ENCODE measurements at regions of chr7 and their contacts with region 1.

Region 1: DNA sequence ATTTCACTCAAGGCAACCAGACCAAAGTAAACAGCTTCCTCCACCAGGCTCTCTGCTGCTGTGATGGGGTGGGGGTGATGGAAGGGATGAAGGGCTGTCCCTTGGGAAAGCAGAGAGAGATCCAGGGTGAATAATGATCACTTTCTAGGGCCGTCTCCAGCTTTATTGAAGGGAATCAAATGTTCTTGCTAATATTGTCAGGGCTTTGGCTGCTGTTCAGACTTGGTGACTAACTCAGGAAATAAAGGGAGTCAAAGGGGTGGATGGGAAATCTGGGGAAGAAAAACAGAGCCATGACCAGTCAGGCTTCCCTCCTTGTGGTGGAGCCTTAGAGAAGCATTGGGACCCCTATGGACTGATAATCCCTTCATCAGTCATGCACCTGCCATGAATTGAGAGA is 196.2 kb upstream of the AGK start:
- DNase-seq: no peak
- H3K4me3 ChIP-seq: no peak overlapping the region
- CTCF ChIP-seq: no peak
- POLR2A ChIP-seq: no peak

Region 2: GRCh38 chr7:141333459-141333858 is 21.6 kb before region 1 on chr7:
- intact Hi-C with region 1: loop called (anchors 1 kb)
- DNase-seq: no peak
- H3K4me3 ChIP-seq: no peak overlapping the region
- CTCF ChIP-seq: no peak
- POLR2A ChIP-seq: no peak

Region 3: DNA sequence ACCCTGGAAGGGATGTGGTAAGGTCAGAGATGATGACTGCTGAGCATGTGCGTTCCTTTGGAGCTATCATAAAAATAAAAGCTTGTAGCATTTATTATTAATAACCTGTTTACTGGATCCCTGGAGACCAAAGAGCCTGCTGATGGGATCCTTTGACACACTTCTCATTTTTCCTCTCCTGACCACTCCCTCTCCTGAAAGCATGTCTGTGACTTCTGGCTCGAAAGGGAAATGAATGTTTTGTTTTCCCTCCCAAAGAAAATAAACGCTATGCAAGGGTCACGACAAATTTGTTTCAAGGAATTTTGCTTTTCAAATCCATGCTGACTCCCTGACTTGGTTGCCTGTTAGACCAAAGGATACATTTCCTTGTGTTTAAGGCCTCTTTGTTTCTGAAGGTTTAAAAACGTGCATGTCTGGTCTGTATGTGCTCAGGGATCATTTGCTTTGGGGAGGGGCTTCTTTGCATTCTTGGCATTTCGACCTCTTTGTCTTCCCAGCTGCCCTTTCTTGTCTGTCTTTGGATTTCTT is 11.1 kb after region 1 on chr7:
- intact Hi-C with region 1: no loop called
- DNase-seq: no peak
- H3K4me3 ChIP-seq: no peak overlapping the region
- CTCF ChIP-seq: no peak
- POLR2A ChIP-seq: no peak

Measured in lower leg skin (tissue), 4 donors.